CD4-positive, alpha-beta memory T cell (primary cell): ENCODE measurements at regions of chr3 and their contacts with region 1.

Region 1: DNA sequence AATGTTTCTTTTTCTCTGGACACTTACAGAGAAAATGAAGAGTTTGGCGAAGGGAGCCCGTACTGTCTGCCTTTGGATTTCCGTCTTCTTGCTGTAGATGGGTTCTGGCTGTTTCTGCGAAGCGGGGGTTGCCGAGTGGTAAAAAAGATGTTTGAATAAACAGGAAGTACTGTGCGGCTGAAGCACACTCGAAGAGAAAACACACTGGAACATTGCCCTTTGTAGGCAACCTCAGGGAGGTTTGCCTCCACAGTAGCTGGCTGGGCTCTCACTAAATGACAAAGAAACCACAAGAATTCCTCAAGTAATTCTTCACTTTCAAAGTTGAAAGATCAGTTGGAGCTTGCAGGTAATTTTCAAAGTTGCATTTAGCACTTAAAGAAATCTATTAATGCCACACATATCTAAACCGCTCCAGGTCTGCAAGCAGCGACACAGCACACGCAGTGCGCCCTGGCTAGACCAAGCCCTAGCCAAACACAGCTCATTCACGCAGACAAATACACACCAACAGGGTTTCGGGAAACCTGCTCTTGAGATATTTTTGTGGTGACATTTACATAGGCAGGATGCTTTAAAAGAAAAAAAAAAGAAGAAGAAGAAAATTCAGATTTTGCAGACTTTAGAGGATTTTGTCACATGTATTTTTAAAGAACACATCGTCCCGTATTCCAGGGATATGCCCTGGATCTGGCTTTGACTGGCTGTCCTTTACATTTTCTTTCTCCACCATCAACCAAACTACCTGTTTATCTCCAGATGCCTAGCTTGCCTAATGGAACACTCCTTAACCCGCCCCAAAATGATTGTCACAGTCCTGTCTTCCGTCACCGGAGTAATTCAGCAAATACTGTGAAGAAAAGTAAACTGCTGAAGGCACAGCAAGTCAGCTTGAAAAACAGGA is 452.8 kb downstream of the FOXP1 start:
- DNase-seq: peak; percentile 79 to 90 (median 85)
- H3K4me3 ChIP-seq: peak overlapping the region; percentile 59 to 90
- H3K4me3 Mint-ChIP-seq: peak overlapping the region; percentile 90 to 99 (median 94)
- H3K27ac ChIP-seq: peak overlapping the region; percentile 87
- H3K27ac Mint-ChIP-seq: peak overlapping the region; percentile 93 to 98 (median 97)
- H3K4me1 ChIP-seq: peaks cover 80% of the 10 kb centered on the region
- H3K4me1 Mint-ChIP-seq: peaks cover 39 to 90% (median 61%) of the 10 kb centered on the region in 4 donors
- H3K27me3 ChIP-seq: no peaks in the 10 kb centered on the region
- H3K27me3 Mint-ChIP-seq: no peaks in the 10 kb centered on the region

Region 2: GRCh38 chr3:71006810-71007785 is 123.6 kb before region 1 on chr3:
- CTCF ChIA-PET with region 1: interaction called, 6 read pairs
- POLR2A ChIA-PET with region 1: interaction called, 3 read pairs
- intact Hi-C with region 1: loop called (anchors 1 kb)
- DNase-seq: peak in 4 of 5 donors; percentile 40 to 45 (median 42)
- H3K4me3 ChIP-seq: no peak overlapping the region
- H3K4me3 Mint-ChIP-seq: peak overlapping the region in 2 of 8 donors; percentile 47 to 66
- H3K27ac ChIP-seq: peak overlapping the region; percentile 68
- H3K27ac Mint-ChIP-seq: peak overlapping the region; percentile 64 to 98 (median 88)
- H3K4me1 ChIP-seq: peaks cover 70% of the 10 kb centered on the region
- H3K4me1 Mint-ChIP-seq: peaks cover 50 to 81% (median 68%) of the 10 kb centered on the region in 4 donors
- H3K27me3 ChIP-seq: no peaks in the 10 kb centered on the region
- H3K27me3 Mint-ChIP-seq: no peaks in the 10 kb centered on the region

Region 3: DNA sequence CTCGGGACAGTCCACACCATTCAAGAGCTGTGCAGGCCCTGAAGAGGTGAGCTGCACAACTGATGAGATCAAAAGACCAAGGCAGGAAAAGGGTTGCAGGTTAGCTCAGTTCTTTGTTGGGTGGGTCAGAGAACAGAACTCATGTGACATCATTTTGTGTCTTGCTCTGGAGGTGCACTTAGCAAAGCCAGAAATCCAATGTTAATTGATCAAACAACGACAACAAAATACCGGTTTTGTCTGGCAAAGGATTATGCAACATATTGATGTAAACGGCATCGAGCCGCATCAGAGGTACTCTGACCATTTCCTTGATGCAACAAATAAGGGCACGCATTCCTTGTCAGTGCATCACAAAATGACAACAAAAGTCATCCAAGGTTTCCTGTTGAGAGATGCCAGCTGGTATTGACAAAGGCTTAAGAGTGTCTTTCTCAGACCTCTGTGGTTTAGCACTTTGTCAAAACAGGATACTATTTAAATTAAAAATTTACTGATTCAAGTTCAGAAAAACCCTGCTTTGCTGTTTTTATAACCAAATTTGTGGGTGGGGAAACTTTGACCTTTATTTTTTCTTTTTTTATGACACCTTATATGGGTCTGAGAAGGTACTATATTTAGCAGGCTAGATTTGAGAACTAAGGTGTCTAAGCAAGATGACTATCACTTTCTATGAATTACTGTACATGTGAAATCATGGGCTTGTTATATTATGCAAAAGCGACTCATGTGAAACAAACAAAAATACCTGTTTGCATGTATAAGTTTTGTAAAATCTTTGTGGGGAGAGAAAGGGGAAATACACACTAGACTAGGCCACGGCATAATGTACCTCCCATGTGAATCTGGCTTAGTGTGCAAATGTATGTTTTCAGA is 43.3 kb before region 1 on chr3:
- CTCF ChIA-PET with region 1: no interaction called
- POLR2A ChIA-PET with region 1: interaction called, 34 read pairs
- intact Hi-C with region 1: loop called (anchors 1 kb)
- DNase-seq: peak; percentile 83 to 93 (median 90)
- H3K4me3 ChIP-seq: peak overlapping the region in 1 of 2 donors; percentile 36
- H3K4me3 Mint-ChIP-seq: peak overlapping the region; percentile 65 to 91 (median 77)
- H3K27ac ChIP-seq: peak overlapping the region; percentile 59
- H3K27ac Mint-ChIP-seq: peak overlapping the region; percentile 88 to 98 (median 96)
- H3K4me1 ChIP-seq: peaks cover 89% of the 10 kb centered on the region
- H3K4me1 Mint-ChIP-seq: peaks cover 64 to 87% (median 77%) of the 10 kb centered on the region in 4 donors
- H3K27me3 ChIP-seq: no peaks in the 10 kb centered on the region
- H3K27me3 Mint-ChIP-seq: no peaks in the 10 kb centered on the region

Region 4: GRCh38 chr3:71185733-71186455 is 55.2 kb after region 1 on chr3:
- CTCF ChIA-PET with region 1: no interaction called
- POLR2A ChIA-PET with region 1: no interaction called
- intact Hi-C with region 1: loop called (anchors 5 kb)
- DNase-seq: peak; percentile 1 to 52 (median 28)
- H3K4me3 ChIP-seq: no peak overlapping the region
- H3K4me3 Mint-ChIP-seq: no peak overlapping the region
- H3K27ac ChIP-seq: no peak overlapping the region
- H3K27ac Mint-ChIP-seq: peak overlapping the region in 5 of 7 donors; percentile 20 to 85 (median 65)
- H3K4me1 ChIP-seq: no peaks in the 10 kb centered on the region
- H3K4me1 Mint-ChIP-seq: peaks cover 10 to 31% (median 15%) of the 10 kb centered on the region in 4 donors
- H3K27me3 ChIP-seq: no peaks in the 10 kb centered on the region
- H3K27me3 Mint-ChIP-seq: no peaks in the 10 kb centered on the region

Region 5: GRCh38 chr3:71226565-71227269 is 96.0 kb after region 1 on chr3:
- CTCF ChIA-PET with region 1: no interaction called
- POLR2A ChIA-PET with region 1: interaction called, 3 read pairs
- intact Hi-C with region 1: loop called (anchors 2 kb)
- DNase-seq: peak; percentile 64 to 88 (median 70)
- H3K4me3 ChIP-seq: peak overlapping the region; percentile 13 to 67
- H3K4me3 Mint-ChIP-seq: peak overlapping the region; percentile 79 to 93 (median 84)
- H3K27ac ChIP-seq: peak overlapping the region; percentile 40
- H3K27ac Mint-ChIP-seq: peak overlapping the region; percentile 83 to 95 (median 92)
- H3K4me1 ChIP-seq: peaks cover 41% of the 10 kb centered on the region
- H3K4me1 Mint-ChIP-seq: peaks cover 39 to 65% (median 53%) of the 10 kb centered on the region in 4 donors
- H3K27me3 ChIP-seq: no peaks in the 10 kb centered on the region
- H3K27me3 Mint-ChIP-seq: no peaks in the 10 kb centered on the region

Region 6: GRCh38 chr3:71495708-71496472 is 365.2 kb after region 1 on chr3:
- CTCF ChIA-PET with region 1: no interaction called
- POLR2A ChIA-PET with region 1: interaction called, 5 read pairs
- intact Hi-C with region 1: loop called (anchors 5 kb)
- DNase-seq: peak in 3 of 5 donors; percentile 27 to 64 (median 39)
- H3K4me3 ChIP-seq: peak overlapping the region; percentile 1 to 26
- H3K4me3 Mint-ChIP-seq: peak overlapping the region; percentile 72 to 89 (median 85)
- H3K27ac ChIP-seq: peak overlapping the region; percentile 50
- H3K27ac Mint-ChIP-seq: peak overlapping the region; percentile 88 to 98 (median 94)
- H3K4me1 ChIP-seq: peaks cover 82% of the 10 kb centered on the region
- H3K4me1 Mint-ChIP-seq: peaks cover 61 to 90% (median 72%) of the 10 kb centered on the region in 4 donors
- H3K27me3 ChIP-seq: no peaks in the 10 kb centered on the region
- H3K27me3 Mint-ChIP-seq: no peaks in the 10 kb centered on the region

Region 7: DNA sequence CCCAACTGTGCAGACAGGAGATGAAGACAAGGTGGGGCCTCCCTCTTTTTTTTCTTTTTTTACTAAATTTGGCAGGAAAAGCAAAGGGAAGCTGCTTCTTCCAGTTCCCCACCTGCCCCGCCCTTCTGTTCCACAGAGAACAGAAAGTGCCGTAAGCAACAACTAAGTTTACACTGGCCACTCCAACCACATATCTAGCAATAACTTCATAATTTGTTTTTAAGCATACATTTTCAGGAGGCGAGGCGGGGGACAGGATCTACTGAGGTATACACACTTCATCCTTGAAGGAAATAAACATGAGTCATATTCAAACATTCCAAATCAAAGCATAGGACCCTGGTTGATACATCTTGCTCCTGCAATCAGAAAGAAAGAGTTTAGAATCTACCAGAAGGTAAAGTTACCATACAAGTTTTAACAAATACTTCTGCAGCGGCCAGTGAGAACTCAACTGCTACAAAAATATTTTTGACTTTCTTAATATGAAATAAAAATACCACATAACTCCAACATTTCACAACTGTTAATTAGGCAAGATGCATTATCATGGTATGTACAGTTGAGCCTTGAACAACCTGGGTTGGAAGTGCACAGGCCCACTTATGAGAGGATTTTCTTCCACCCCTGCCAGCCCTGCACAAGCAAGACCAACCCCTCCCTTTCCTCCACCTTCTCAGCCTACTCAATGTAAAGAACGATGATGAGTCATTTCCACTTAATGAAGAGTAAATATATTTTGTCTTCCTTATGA is 402.1 kb after region 1 on chr3:
- CTCF ChIA-PET with region 1: no interaction called
- POLR2A ChIA-PET with region 1: no interaction called
- intact Hi-C with region 1: no loop called
- DNase-seq: no peak
- H3K4me3 ChIP-seq: no peak overlapping the region
- H3K4me3 Mint-ChIP-seq: no peak overlapping the region
- H3K27ac ChIP-seq: no peak overlapping the region
- H3K27ac Mint-ChIP-seq: no peak overlapping the region
- H3K4me1 ChIP-seq: peaks cover 8% of the 10 kb centered on the region
- H3K4me1 Mint-ChIP-seq: peaks cover 8 to 17% (median 11%) of the 10 kb centered on the region in 4 donors
- H3K27me3 ChIP-seq: no peaks in the 10 kb centered on the region
- H3K27me3 Mint-ChIP-seq: no peaks in the 10 kb centered on the region